B cell (primary cell): ENCODE measurements at regions of chr10 and their contacts with region 1.

Region 1: GRCh38 chr10:99845837-99846382 is 63.5 kb downstream of the ABCC2 start:
- DNase-seq: peak; percentile 85
- ATAC-seq: peak; percentile 84
- H3K4me3 ChIP-seq: peak overlapping the region in 4 of 5 experiments; percentile 10 to 61 (median 41)
- H3K4me3 Mint-ChIP-seq: peak overlapping the region; percentile 75
- H3K27ac ChIP-seq: no peak overlapping the region
- H3K27ac Mint-ChIP-seq: no peak overlapping the region
- H3K4me1 ChIP-seq: peaks cover 0 to 10% of the 10 kb centered on the region in 2 donors
- H3K4me1 Mint-ChIP-seq: peaks cover 7% of the 10 kb centered on the region
- H3K27me3 ChIP-seq: peaks cover 0 to 7% (median 0%) of the 10 kb centered on the region in 4 experiments
- H3K27me3 Mint-ChIP-seq: no peaks in the 10 kb centered on the region
- CTCF ChIP-seq: peak; percentile 93

Region 2: GRCh38 chr10:99784025-99784726 is 61.7 kb before region 1 on chr10:
- CTCF ChIA-PET with region 1: no interaction called
- POLR2A ChIA-PET with region 1: no interaction called
- intact Hi-C with region 1: no loop called
- DNase-seq: no peak
- ATAC-seq: no peak
- H3K4me3 ChIP-seq: no peak overlapping the region
- H3K4me3 Mint-ChIP-seq: no peak overlapping the region
- H3K27ac ChIP-seq: no peak overlapping the region
- H3K27ac Mint-ChIP-seq: no peak overlapping the region
- H3K4me1 ChIP-seq: peaks cover 4 to 5% of the 10 kb centered on the region in 2 donors
- H3K4me1 Mint-ChIP-seq: peaks cover 5% of the 10 kb centered on the region
- H3K27me3 ChIP-seq: no peaks in the 10 kb centered on the region
- H3K27me3 Mint-ChIP-seq: no peaks in the 10 kb centered on the region
- CTCF ChIP-seq: no peak

Region 3: GRCh38 chr10:99834410-99834809 is 11.5 kb before region 1 on chr10:
- CTCF ChIA-PET with region 1: interaction called, 11 read pairs
- POLR2A ChIA-PET with region 1: no interaction called
- intact Hi-C with region 1: no loop called
- DNase-seq: no peak
- ATAC-seq: no peak
- H3K4me3 ChIP-seq: no peak overlapping the region
- H3K4me3 Mint-ChIP-seq: no peak overlapping the region
- H3K27ac ChIP-seq: no peak overlapping the region
- H3K27ac Mint-ChIP-seq: no peak overlapping the region
- H3K4me1 ChIP-seq: no peaks in the 10 kb centered on the region
- H3K4me1 Mint-ChIP-seq: no peaks in the 10 kb centered on the region
- H3K27me3 ChIP-seq: no peaks in the 10 kb centered on the region
- H3K27me3 Mint-ChIP-seq: no peaks in the 10 kb centered on the region
- CTCF ChIP-seq: no peak

Region 4: DNA sequence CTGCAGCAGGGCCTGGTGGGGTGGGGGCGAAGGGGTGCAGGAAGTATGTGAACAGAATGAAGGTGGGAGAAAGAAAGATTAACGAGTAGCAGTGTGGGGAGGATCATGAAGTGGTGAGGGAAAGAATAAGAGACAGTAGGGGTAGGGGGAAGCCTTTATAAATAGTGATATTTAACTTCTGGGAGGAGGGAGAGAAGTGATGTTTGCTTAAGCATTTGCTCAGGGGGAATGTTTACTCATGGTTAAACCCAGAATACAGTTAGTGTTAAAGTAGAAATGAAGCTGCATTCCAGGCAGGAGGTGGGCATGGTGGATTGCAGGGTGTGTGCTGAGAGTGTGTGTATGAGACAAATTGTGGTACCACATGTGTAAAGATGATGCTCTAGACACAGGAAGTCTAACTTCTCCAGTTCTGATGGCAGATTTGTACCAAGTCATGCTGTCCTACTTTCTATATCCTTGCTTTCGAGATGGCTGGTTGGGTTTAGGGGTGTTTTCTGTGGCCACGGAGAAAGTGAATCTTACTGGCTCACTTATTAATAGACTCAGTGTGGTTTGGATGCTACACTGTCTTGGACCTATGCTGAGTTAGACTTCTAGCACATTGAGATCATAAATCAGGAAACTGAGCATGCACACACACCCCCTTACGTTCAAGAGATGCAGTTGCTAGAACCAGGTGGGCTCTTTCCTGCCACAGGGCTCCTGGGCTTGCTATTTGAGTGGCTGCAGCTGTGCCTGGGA is 174.4 kb after region 1 on chr10:
- CTCF ChIA-PET with region 1: interaction called, 17 read pairs
- POLR2A ChIA-PET with region 1: no interaction called
- intact Hi-C with region 1: no loop called
- DNase-seq: peak; percentile 49
- ATAC-seq: peak; percentile 66
- H3K4me3 ChIP-seq: no peak overlapping the region
- H3K4me3 Mint-ChIP-seq: peak overlapping the region; percentile 17
- H3K27ac ChIP-seq: no peak overlapping the region
- H3K27ac Mint-ChIP-seq: peak overlapping the region; percentile 64
- H3K4me1 ChIP-seq: peaks cover 12 to 15% of the 10 kb centered on the region in 2 donors
- H3K4me1 Mint-ChIP-seq: peaks cover 19% of the 10 kb centered on the region
- H3K27me3 ChIP-seq: no peaks in the 10 kb centered on the region
- H3K27me3 Mint-ChIP-seq: no peaks in the 10 kb centered on the region
- CTCF ChIP-seq: no peak

Region 5: DNA sequence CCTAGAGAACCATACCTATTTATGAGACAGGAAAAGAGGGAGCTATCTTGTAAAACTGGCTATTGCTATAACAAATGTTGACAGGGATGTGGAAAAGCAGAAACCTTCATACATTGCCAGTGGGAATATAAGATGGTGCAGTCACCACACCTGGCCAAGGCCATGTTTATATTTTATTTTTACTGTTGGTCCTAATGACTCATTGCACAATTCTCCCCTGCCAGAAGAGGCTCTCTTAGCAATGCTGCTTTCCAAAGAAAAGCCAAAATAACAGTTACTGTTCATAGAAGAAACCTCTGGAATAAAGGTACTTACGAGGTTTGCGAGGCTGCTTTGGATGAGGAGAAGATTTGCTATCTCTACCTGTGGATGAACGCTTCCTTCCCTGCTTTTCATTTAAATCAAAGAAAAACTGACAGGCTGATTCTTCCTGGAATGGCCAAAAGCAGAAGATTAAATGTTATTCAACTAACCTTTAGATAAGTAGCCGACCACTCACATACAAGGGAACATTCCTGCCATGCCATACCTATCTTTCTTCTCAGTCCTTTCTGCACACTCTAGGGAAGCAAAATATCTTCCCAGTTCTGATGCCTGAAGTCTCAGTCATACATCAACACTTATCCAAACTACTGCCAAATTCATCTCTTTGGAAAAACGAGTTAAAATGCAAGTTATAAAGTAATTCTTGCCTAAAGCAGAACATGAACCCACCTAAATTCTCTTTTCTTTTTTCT is 399.7 kb after region 1 on chr10:
- CTCF ChIA-PET with region 1: no interaction called
- POLR2A ChIA-PET with region 1: no interaction called
- intact Hi-C with region 1: loop called (anchors 10 kb)
- DNase-seq: no peak
- ATAC-seq: no peak
- H3K4me3 ChIP-seq: no peak overlapping the region
- H3K4me3 Mint-ChIP-seq: no peak overlapping the region
- H3K27ac ChIP-seq: no peak overlapping the region
- H3K27ac Mint-ChIP-seq: no peak overlapping the region
- H3K4me1 ChIP-seq: no peaks in the 10 kb centered on the region
- H3K4me1 Mint-ChIP-seq: peaks cover under 1% of the 10 kb centered on the region
- H3K27me3 ChIP-seq: no peaks in the 10 kb centered on the region
- H3K27me3 Mint-ChIP-seq: no peaks in the 10 kb centered on the region
- CTCF ChIP-seq: no peak